ENCODE measurements at regions of chr10 and their contacts with region 1.

Region 1: GRCh38 chr10:90751107-90751997 is 106.5 kb downstream of the HTR7 start:
- H3K4me3 ChIP-seq: no peak overlapping the region
- H3K27ac ChIP-seq: no peak overlapping the region
- H3K4me1 ChIP-seq: no peaks in the 10 kb centered on the region
- CTCF ChIP-seq: peak; percentile 52; the same call in 1 of the 2 replicates

Region 2: DNA sequence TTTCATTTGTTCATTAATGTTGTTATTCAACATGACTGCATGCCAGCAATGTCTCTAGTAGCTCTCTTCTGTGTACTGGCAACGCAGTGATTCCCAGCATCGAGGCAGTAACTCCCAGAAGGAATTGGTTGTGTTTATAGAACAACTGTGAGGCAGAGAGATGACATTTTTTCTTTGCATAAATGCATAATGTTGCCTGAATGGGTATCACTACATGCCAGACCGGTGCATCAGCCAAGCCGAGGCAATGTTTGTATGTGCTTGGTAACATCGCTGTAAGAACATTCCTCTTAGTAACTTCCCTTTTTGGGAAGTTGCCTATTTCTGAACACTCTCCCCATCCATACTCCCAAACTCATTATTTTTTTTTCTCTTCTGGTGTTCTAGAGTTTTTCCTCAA is 76.4 kb before region 1 on chr10:
- CTCF ChIA-PET with region 1: no interaction called
- POLR2A ChIA-PET with region 1: no interaction called
- H3K4me3 ChIP-seq: no peak overlapping the region
- H3K27ac ChIP-seq: no peak overlapping the region
- H3K4me1 ChIP-seq: no peaks in the 10 kb centered on the region
- CTCF ChIP-seq: no peak

Region 3: GRCh38 chr10:90740265-90740664 is 11.1 kb before region 1 on chr10:
- CTCF ChIA-PET with region 1: interaction called, 10 read pairs
- POLR2A ChIA-PET with region 1: no interaction called
- H3K4me3 ChIP-seq: no peak overlapping the region
- H3K27ac ChIP-seq: no peak overlapping the region
- H3K4me1 ChIP-seq: no peaks in the 10 kb centered on the region
- CTCF ChIP-seq: no peak

Region 4: DNA sequence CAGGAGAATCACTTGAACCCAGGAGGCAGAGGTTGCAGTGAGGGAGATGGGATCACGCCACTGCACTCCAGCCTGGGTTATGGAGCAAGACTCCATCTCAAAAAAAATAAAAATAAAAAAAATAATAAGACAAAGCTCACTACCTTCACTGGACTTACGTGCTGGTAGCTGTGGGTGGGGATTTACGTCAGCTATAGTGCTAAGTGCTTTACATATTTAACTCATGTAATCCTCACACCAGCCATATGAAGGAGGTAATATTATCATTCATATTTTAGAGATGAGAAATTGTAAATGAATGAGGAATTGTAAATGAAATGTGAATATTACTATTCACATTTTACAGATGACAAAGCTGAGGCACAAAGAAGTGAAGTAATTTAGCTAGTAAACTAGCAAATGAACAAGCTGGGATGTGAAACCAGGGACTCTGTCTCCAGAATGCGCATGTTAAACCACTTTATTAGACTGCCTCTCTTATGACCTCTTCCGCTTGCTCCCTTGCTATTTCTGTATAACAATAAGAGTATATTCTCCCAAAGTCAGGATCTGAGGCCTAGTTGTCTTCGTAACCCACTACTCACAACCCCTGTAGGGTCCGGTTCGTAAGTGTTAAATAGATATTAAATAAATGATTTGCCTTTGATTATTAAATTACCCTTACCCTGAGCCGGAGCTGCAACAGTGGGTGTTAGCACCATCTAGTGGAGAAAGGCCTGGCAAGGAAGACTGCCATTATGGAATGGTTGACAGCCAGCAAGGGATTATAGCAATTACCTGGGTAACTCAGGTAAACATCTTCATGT is 36.2 kb after region 1 on chr10:
- CTCF ChIA-PET with region 1: interaction called, 25 read pairs
- POLR2A ChIA-PET with region 1: no interaction called
- H3K4me3 ChIP-seq: no peak overlapping the region
- H3K27ac ChIP-seq: no peak overlapping the region
- H3K4me1 ChIP-seq: no peaks in the 10 kb centered on the region
- CTCF ChIP-seq: peak; percentile 34

Region 5: GRCh38 chr10:90857635-90858460 is 106.5 kb after region 1 on chr10 and contains the start of gene HTR7:
- CTCF ChIA-PET with region 1: interaction called, 199 read pairs
- POLR2A ChIA-PET with region 1: no interaction called
- H3K4me3 ChIP-seq: peak within 1 kb of the TSS; percentile 53
- H3K27ac ChIP-seq: no peak within 1 kb of the TSS; the same call in 1 of the 2 replicates
- H3K4me1 ChIP-seq: no peaks in the 10 kb centered on the region
- CTCF ChIP-seq: no peak

Region 6: DNA sequence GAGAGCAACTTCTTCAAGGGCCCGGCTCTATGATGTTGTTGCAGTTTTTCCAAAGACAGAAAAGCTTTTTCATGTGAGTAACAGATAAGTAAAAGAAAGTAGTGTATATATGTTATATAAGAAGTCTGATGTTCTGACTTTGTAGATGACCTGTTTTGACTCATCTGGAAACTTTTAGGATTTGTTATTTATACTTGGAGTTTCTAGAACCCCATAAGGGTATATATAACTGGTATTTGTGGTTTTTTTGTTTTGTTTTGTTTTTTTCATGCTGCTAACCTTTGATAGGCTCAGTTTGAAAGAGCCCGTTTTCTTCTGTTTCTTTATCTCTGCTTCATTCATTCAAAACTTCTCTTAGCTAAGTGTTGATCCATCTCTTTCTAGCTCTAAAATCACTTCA is 127.7 kb after region 1 on chr10:
- CTCF ChIA-PET with region 1: interaction called, 12 read pairs
- POLR2A ChIA-PET with region 1: no interaction called
- H3K4me3 ChIP-seq: no peak overlapping the region
- H3K27ac ChIP-seq: no peak overlapping the region
- H3K4me1 ChIP-seq: no peaks in the 10 kb centered on the region
- CTCF ChIP-seq: no peak

Region 7: DNA sequence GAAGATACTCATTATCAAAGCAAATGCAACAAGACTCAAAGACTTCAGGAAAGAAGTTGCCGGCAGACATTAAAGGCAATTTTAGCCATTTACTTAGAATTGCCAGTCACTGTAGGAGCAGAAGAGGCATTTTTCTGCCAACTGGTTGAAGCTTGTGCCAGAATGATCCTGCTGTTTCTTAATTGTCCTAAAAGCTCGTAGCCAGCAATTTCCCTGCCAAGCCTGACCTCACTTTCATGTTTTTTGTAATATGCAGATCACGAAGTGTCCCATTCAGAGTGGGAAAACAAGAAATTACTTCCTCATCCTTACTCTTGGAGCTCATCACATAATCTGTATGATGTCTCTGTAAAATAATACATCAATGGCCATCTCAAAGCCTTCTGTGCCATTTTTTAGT is 300.5 kb after region 1 on chr10:
- CTCF ChIA-PET with region 1: no interaction called
- POLR2A ChIA-PET with region 1: no interaction called
- H3K4me3 ChIP-seq: no peak overlapping the region
- H3K27ac ChIP-seq: no peak overlapping the region
- H3K4me1 ChIP-seq: 0 out of 2 replicates have a peak, but pooled peaks cover 5% of the 10 kb centered on the region
- CTCF ChIP-seq: no peak

Measured in HEK293 (cell line).